Right ventricle myocardium superior (tissue), 1 donor: ENCODE measurements at regions of chr17 and their contacts with region 1.

Region 1: GRCh38 chr17:73311781-73312641 is at the start of gene CDC42EP4:
- DNase-seq: peak; percentile 97
- ATAC-seq: peak; percentile 88
- total RNA-seq, gene CDC42EP4: 53.0 TPM

Region 2: GRCh38 chr17:73240561-73240960 is 71.5 kb before region 1 on chr17:
- intact Hi-C with region 1: no loop called
- DNase-seq: no peak
- ATAC-seq: no peak

Region 3: GRCh38 chr17:73278465-73279453 is 33.3 kb before region 1 on chr17:
- intact Hi-C with region 1: loop called (anchors 5 kb)
- DNase-seq: no peak
- ATAC-seq: peak; percentile 69

Region 4: DNA sequence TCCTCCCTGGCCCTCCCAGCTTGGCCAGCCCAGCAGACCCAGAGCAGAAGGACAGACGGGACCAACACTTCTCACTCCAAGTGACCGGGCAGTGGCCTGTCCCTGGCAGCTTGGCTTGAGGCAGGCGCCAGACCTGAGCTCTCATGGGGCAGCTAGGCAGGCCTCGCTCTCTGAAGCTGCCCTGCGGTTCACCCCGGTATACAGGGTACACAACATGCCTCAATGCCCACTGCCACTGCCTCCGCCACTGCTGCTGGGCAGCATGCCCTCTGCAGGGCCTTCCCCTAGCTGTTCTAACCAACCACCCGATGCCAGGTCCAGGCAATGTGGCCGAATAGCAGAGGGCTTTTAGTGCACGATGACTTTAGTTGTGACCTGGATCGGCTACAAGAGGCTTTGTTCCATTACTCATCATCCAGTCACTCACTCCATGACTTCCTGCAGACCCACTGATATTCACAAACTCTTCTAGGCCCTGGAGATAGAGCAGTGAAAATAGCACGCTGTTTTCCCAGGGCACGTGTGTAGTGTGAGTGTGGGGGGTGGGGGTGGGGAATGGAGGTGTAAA is 20.0 kb before region 1 on chr17:
- intact Hi-C with region 1: loop called (anchors 2 kb)
- DNase-seq: peak; percentile 83
- ATAC-seq: peak; percentile 66

Region 5: GRCh38 chr17:73365906-73366623 is 54.1 kb after region 1 on chr17:
- intact Hi-C with region 1: loop called (anchors 5 kb)
- DNase-seq: peak; percentile 77
- ATAC-seq: peak; percentile 52